IMR-90 (cell line): ENCODE measurements at regions of chr15 and their contacts with region 1.

Region 1: GRCh38 chr15:57527382-57528091 is 64.2 kb upstream of the MYZAP start:
- DNase-seq: peak; percentile 88
- ATAC-seq: peak; percentile 83
- H3K4me3 ChIP-seq: no peak overlapping the region
- H3K27ac ChIP-seq: no peak overlapping the region
- H3K4me1 ChIP-seq: no peaks in the 10 kb centered on the region
- H3K27me3 ChIP-seq: peaks cover 39% of the 10 kb centered on the region
- CTCF ChIP-seq: peak; percentile 78
- POLR2A ChIP-seq: no peak
- RAD21 ChIP-seq: peak; percentile 92

Region 2: DNA sequence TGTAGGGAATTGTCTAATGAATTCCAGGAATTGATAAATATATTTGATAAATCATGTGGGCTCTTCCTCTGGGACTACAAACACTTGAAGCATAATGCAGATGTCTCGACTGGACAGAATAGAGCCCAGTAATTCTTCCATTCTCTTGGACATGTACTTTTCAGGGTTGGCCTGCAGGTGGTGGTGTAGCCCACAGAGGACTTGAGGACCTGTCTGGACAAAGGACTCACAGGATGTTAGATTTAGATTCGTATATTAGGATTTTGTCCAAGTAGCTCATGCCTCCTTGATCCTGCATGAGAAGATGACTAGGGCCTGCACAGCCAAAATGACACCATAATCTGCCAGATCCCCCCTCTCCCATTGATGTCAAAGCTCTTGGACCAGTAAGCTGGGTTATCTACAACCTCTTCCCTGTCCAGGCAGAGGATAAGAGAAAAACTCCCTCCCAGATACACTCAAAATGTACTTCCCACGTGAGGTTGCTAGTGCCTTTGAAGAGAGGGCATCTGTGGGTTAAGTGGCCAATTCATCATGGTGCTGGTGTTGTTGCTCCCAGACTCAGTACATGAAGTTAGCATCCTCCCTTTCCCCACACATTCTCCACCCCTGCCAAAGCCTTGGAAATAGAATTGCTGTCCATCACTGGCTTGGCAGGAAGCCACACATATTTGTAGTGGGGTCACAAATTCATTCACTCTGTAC is 705.7 kb before region 1 on chr15:
- CTCF ChIA-PET with region 1: no interaction called
- POLR2A ChIA-PET with region 1: no interaction called
- dilution Hi-C with region 1: no loop called
- in situ Hi-C with region 1: loop called (anchors 25 kb)
- intact Hi-C with region 1: loop called (anchors 5 kb)
- DNase-seq: peak; percentile 77
- ATAC-seq: peak; percentile 95
- H3K4me3 ChIP-seq: no peak overlapping the region
- H3K27ac ChIP-seq: no peak overlapping the region
- H3K4me1 ChIP-seq: peaks cover 6% of the 10 kb centered on the region
- H3K27me3 ChIP-seq: no peaks in the 10 kb centered on the region
- CTCF ChIP-seq: peak; percentile 79
- POLR2A ChIP-seq: no peak
- RAD21 ChIP-seq: peak; percentile 85

Region 3: GRCh38 chr15:57146506-57147201 is 380.9 kb before region 1 on chr15:
- CTCF ChIA-PET with region 1: no interaction called
- POLR2A ChIA-PET with region 1: no interaction called
- dilution Hi-C with region 1: no loop called
- in situ Hi-C with region 1: loop called (anchors 10 kb)
- intact Hi-C with region 1: loop called (anchors 1 kb)
- DNase-seq: peak; percentile 73
- ATAC-seq: peak; percentile 52
- H3K4me3 ChIP-seq: peak overlapping the region; percentile 20; the same call in 1 of the 2 replicates
- H3K27ac ChIP-seq: no peak overlapping the region; the same call in 1 of the 2 replicates
- H3K4me1 ChIP-seq: peaks cover 25% of the 10 kb centered on the region
- H3K27me3 ChIP-seq: no peaks in the 10 kb centered on the region
- CTCF ChIP-seq: peak; percentile 88
- POLR2A ChIP-seq: no peak
- RAD21 ChIP-seq: peak; percentile 83

Region 4: DNA sequence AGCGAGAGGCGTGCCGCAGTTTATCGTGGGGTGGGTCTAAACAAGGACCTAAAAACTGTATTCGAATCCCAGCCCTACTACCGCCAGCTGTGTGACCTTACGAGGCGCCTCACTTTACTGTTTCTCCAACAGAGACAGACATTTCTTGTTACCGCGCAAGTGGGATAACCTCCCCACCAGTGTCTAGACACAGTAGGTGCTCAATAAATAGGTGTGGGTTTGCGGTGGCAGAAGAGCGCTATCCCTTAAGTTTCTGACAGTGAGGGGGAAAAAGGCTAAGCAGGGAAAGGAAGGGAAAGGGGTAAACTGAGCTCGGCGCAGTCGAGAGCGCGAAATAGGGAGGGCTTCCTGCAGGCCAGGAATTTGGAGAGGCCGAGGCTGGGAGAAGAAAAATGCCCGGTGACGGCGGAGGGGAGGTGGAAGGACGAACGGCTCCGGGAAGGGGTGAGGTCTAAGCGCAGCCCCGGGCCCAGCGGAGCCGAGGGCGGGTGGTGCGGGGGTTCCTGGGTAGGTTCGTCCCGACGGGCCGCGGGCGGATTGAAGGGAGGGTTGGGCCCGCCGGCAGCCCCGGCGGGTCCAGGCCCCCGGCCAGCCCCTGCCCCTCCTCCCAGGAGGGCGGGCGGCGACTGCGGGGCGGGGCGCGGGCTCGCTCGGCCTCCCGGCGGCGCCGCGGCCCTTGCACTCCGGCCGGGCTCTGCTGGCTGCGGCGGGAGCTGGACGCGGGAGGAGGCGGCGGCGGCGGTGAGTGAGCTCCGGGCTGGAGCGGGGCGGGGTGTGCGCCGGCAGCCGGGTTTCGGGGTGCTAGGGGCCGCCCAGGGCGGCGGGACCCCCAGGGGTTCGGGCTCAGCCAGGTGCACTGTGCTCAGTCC is 151.5 kb before region 1 on chr15 and contains the start of gene CGNL1:
- CTCF ChIA-PET with region 1: no interaction called
- POLR2A ChIA-PET with region 1: no interaction called
- dilution Hi-C with region 1: no loop called
- in situ Hi-C with region 1: no loop called
- intact Hi-C with region 1: no loop called
- DNase-seq: no peak
- ATAC-seq: peak; percentile 97
- H3K4me3 ChIP-seq: peak within 1 kb of the TSS; percentile 32
- H3K27ac ChIP-seq: no peak within 1 kb of the TSS
- H3K4me1 ChIP-seq: peaks cover 3% of the 10 kb centered on the region; the same call in 1 of the 2 replicates
- H3K27me3 ChIP-seq: peaks cover 65% of the 10 kb centered on the region
- CTCF ChIP-seq: no peak
- POLR2A ChIP-seq: no peak
- RAD21 ChIP-seq: no peak
- total RNA-seq, gene CGNL1: under 0.01 and 0.18 TPM in 2 replicates

Region 5: GRCh38 chr15:57462381-57462780 is 65.2 kb before region 1 on chr15:
- CTCF ChIA-PET with region 1: no interaction called
- POLR2A ChIA-PET with region 1: no interaction called
- dilution Hi-C with region 1: no loop called
- in situ Hi-C with region 1: no loop called
- intact Hi-C with region 1: loop called (anchors 5 kb)
- DNase-seq: peak; percentile 4
- ATAC-seq: peak; percentile 44; the same call in 1 of the 2 replicates
- H3K4me3 ChIP-seq: no peak overlapping the region
- H3K27ac ChIP-seq: no peak overlapping the region
- H3K4me1 ChIP-seq: no peaks in the 10 kb centered on the region
- H3K27me3 ChIP-seq: peaks cover 23% of the 10 kb centered on the region
- CTCF ChIP-seq: peak; percentile 27; the same call in 1 of the 2 replicates
- POLR2A ChIP-seq: no peak
- RAD21 ChIP-seq: peak; percentile 21; the same call in 1 of the 2 replicates

Region 6: DNA sequence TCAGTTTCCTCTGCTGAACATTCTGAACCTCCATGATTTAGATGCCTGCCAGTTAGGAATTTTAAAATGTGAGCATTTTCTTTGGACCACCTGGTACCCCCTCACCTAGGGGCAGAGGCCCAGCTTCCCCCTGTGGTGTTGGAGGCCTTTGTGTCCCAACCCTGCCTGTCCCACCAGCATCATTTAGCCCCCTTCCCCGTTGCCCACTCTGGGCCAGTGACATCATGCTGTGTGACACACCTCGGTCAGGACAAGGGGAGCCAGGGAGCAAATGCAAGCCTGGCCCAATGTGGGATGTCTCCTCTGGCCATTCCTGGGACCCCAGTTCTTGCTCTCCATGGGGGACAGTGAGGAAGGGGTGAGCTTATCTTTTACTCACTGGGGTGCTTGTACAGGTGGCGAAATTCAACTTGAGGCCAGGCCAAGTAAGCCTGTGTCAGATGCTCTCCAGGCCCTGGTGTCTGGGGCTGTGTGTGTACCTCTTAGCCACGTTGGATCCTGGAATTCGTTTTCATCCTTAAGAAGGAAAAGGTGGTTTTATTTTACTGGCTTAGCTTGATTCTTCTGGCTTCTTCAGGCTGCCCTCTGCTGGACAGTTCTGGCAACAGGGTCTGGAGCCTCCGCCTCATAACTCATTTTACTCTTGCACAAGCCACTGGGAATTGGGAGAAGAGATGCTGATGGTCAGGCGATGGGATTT is 14.4 kb after region 1 on chr15:
- CTCF ChIA-PET with region 1: interaction called, 19 read pairs
- POLR2A ChIA-PET with region 1: no interaction called
- dilution Hi-C with region 1: no loop called
- in situ Hi-C with region 1: no loop called
- intact Hi-C with region 1: no loop called
- DNase-seq: peak; percentile 75
- ATAC-seq: peak; percentile 94
- H3K4me3 ChIP-seq: no peak overlapping the region
- H3K27ac ChIP-seq: no peak overlapping the region
- H3K4me1 ChIP-seq: no peaks in the 10 kb centered on the region
- H3K27me3 ChIP-seq: peaks cover 34% of the 10 kb centered on the region
- CTCF ChIP-seq: peak; percentile 90
- POLR2A ChIP-seq: no peak
- RAD21 ChIP-seq: peak; percentile 67